ENCODE measurements at regions of chr17 and their contacts with region 1.

Region 1: GRCh38 chr17:7014261-7014994 is 2.0 kb downstream of the RNASEK start:
- DNase-seq: peak; percentile 97
- H3K4me3 ChIP-seq: peak overlapping the region; percentile 80 to 95 (median 81)
- H3K27ac ChIP-seq: peak overlapping the region; percentile 93
- H3K4me1 ChIP-seq: peaks cover 24% of the 10 kb centered on the region
- H3K27me3 ChIP-seq: no peaks in the 10 kb centered on the region
- CTCF ChIP-seq: peak; percentile 29 to 60

Region 2: DNA sequence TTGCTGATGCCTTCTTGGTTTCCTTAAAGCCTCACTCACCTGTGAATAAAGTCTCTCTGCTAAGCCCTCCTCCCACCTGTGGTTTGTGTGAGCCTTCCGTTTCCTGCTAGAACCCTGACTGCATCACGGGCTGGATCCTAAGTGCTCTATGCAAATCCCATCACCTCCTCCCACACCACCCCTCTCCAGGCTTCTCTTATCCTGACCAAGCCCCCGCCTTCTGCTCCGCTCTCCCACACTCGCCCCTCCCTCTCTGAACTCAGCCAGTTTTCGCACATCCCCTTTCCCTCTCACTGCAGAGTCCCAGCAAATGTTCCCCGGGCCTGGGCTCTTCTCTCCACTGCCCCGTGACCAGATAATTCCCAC is 518.3 kb before region 1 on chr17:
- CTCF ChIA-PET with region 1: no interaction called
- dilution Hi-C with region 1: no loop called
- in situ Hi-C with region 1: loop called in 1 of 2 experiments (anchors 25 kb)
- intact Hi-C with region 1: no loop called
- DNase-seq: no peak
- H3K4me3 ChIP-seq: no peak overlapping the region
- H3K27ac ChIP-seq: no peak overlapping the region
- H3K4me1 ChIP-seq: no peaks in the 10 kb centered on the region
- H3K27me3 ChIP-seq: no peaks in the 10 kb centered on the region
- CTCF ChIP-seq: no peak

Region 3: DNA sequence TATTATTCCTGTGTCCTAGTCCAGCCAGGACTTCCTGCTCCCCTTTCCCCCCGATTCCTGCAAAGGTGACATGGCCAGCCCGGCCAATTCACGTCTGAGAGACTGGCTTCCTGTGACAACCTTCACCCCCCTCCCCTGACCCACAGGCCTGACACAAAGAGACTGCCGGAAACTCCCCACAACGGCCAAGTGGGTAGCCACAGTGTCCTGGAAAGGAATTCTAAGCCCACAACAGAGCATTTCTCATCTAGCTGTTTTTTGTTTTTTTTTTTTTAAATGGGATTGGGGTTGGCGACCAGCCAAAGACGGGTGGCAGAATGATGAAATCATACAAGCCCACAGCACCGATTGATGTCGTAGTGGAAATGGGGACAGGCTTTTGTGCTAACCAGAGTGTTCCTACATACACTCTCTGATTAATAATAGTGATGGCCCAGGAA is 261.4 kb before region 1 on chr17:
- CTCF ChIA-PET with region 1: interaction called, 9 read pairs
- dilution Hi-C with region 1: no loop called
- in situ Hi-C with region 1: no loop called
- intact Hi-C with region 1: loop called (anchors 2 kb)
- DNase-seq: peak; percentile 66
- H3K4me3 ChIP-seq: no peak overlapping the region
- H3K27ac ChIP-seq: peak overlapping the region; percentile 92
- H3K4me1 ChIP-seq: peaks cover 24% of the 10 kb centered on the region
- H3K27me3 ChIP-seq: no peaks in the 10 kb centered on the region
- CTCF ChIP-seq: no peak

Region 4: GRCh38 chr17:6853764-6854442 is 160.5 kb before region 1 on chr17:
- CTCF ChIA-PET with region 1: no interaction called
- dilution Hi-C with region 1: no loop called
- in situ Hi-C with region 1: loop called (anchors 5 kb)
- intact Hi-C with region 1: no loop called
- DNase-seq: peak; percentile 79
- H3K4me3 ChIP-seq: peak overlapping the region; percentile 58 to 59 (median 59)
- H3K27ac ChIP-seq: peak overlapping the region; percentile 94
- H3K4me1 ChIP-seq: peaks cover 14% of the 10 kb centered on the region
- H3K27me3 ChIP-seq: no peaks in the 10 kb centered on the region
- CTCF ChIP-seq: peak; percentile 55 to 72

Region 5: DNA sequence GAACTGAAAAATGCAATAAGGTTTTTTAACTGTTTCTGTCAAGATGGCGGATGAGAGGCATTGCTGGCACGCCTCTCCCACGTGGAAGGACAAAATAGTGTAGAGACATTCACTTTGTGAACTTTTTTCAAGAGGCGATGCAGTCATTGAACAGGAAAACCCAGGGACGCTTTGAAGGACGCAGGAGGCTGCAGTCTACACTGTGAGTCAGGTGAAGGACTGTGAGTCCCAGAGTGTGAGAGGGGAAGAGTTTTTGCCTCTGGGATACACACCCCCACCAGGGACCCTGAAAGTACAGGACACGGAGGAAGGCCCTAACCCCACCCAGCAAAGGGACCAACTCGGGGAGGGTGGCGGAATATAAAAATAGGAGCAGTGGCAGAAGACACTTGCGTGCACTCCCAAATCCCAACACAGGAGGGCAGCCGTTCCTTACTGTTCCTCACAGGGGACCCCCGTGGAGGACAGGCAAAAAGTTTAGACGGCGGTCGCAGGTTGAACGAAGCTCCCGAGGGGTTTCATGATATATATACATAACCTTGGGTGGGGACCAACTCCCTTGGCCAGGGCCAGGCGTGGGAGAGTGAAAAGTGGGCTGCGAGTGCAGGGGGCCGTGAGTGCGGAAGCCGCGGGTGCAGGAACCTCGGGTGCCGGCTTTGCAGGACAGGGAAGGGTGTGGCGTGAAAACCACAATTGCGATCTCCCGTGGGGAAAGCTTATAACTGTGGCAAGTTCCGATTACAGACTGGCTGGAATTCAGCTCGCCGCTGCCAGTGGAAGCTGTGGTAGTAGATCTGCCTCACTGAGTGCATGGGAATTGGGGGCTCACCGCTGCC is 100.6 kb before region 1 on chr17:
- CTCF ChIA-PET with region 1: no interaction called
- dilution Hi-C with region 1: no loop called
- in situ Hi-C with region 1: loop called in 1 of 2 experiments (anchors 5 kb)
- intact Hi-C with region 1: no loop called
- DNase-seq: no peak
- H3K4me3 ChIP-seq: no peak overlapping the region
- H3K27ac ChIP-seq: no peak overlapping the region
- H3K4me1 ChIP-seq: no peaks in the 10 kb centered on the region
- H3K27me3 ChIP-seq: no peaks in the 10 kb centered on the region
- CTCF ChIP-seq: peak; percentile 43 to 70

Region 6: GRCh38 chr17:7035591-7036368 is 21.4 kb after region 1 on chr17 and contains the start of gene SLC16A13:
- CTCF ChIA-PET with region 1: no interaction called
- dilution Hi-C with region 1: no loop called
- in situ Hi-C with region 1: no loop called
- intact Hi-C with region 1: loop called (anchors 2 kb)
- DNase-seq: peak; percentile 99
- H3K4me3 ChIP-seq: peak within 1 kb of the TSS; percentile 65 to 71 (median 70)
- H3K27ac ChIP-seq: peak within 1 kb of the TSS; percentile 81
- H3K4me1 ChIP-seq: peaks cover 12% of the 10 kb centered on the region
- H3K27me3 ChIP-seq: no peaks in the 10 kb centered on the region
- CTCF ChIP-seq: no peak
- total RNA-seq, gene SLC16A13: 2.7 to 11.9 TPM